Mammary epithelial cell (primary cell): ENCODE measurements at regions of chr21 and their contacts with region 1.

Region 1: DNA sequence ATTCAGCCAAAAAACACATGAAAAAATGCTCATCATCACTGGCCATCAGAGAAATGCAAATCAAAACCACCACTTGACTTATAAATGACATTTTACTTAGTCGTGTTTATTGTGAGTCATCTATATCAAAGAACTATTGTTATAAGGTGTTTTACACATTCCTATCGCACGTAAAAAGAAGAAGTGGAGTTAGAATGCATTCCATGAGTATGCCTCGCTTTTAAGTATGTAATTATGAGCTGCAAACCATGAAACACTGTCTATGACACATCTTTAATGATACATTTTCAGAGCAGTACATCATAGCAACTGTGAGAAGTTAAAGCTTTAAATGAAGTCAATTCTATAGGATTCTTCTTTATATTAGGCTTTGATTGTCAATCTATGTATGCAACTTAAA is 614.3 kb upstream of the ADAMTS5 start:
- DNase-seq: peak; percentile 92
- H3K4me3 ChIP-seq: no peak overlapping the region
- H3K27ac ChIP-seq: peak overlapping the region; percentile 89
- H3K4me1 ChIP-seq: peaks cover 22% of the 10 kb centered on the region
- H3K27me3 ChIP-seq: no peaks in the 10 kb centered on the region
- CTCF ChIP-seq: no peak

Region 2: DNA sequence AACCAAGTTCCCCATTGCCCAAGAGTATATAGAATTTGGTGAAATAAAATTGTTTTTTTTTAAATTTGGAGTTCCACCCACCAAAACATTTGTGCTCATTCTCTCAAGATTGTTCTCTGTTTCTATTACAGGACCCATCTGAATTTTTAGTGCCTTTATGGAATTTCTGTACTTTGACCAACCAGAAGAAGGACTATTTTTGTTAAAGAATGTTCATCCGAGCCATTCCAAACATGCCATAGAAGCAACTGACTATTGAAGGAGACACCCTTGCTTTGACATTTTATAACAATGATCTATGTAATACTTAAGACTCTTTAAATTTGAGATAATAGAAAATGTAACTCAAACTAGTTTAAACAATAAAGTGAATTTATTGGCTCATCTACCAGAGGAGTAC is 41.5 kb after region 1 on chr21:
- CTCF ChIA-PET with region 1: no interaction called
- dilution Hi-C with region 1: no loop called
- in situ Hi-C with region 1: no loop called
- intact Hi-C with region 1: no loop called
- DNase-seq: no peak
- H3K4me3 ChIP-seq: no peak overlapping the region
- H3K27ac ChIP-seq: no peak overlapping the region
- H3K4me1 ChIP-seq: no peaks in the 10 kb centered on the region
- H3K27me3 ChIP-seq: no peaks in the 10 kb centered on the region
- CTCF ChIP-seq: no peak

Region 3: GRCh38 chr21:27648560-27648959 is 67.4 kb after region 1 on chr21:
- CTCF ChIA-PET with region 1: no interaction called
- dilution Hi-C with region 1: no loop called
- in situ Hi-C with region 1: no loop called
- intact Hi-C with region 1: loop called (anchors 1 kb)
- DNase-seq: peak; percentile 85
- H3K4me3 ChIP-seq: no peak overlapping the region
- H3K27ac ChIP-seq: peak overlapping the region; percentile 98
- H3K4me1 ChIP-seq: peaks cover 47% of the 10 kb centered on the region
- H3K27me3 ChIP-seq: no peaks in the 10 kb centered on the region
- CTCF ChIP-seq: no peak

Region 4: DNA sequence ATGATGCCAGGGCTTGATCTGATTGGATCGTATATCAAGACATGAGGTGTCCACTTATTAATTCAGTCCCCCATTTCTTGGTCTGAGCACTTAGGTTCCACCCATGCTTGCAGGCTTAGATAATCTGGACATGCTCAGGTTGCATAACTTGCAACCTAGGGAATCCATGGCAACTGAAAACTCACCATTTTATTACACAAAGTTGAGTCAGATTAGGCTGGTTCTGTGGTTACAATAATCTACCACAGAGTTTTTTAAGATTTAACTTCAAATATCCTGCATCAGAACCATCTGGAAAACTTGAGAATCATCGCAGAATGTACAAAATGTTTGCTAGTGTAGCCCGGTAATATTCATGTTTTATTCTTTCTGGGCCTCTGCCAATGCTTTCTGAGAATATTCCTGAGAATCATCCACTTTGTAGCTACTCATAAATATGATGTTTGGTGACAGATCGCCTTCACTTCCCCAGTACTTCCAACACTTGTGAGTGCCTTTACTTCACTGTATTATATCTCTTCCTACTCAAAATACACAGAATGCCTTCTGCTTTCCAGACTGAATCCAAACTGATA is 93.0 kb after region 1 on chr21:
- CTCF ChIA-PET with region 1: no interaction called
- dilution Hi-C with region 1: no loop called
- in situ Hi-C with region 1: loop called in 1 of 2 experiments (anchors 10 kb)
- intact Hi-C with region 1: no loop called
- DNase-seq: peak; percentile 83
- H3K4me3 ChIP-seq: no peak overlapping the region
- H3K27ac ChIP-seq: peak overlapping the region; percentile 60
- H3K4me1 ChIP-seq: peaks cover 10% of the 10 kb centered on the region
- H3K27me3 ChIP-seq: no peaks in the 10 kb centered on the region
- CTCF ChIP-seq: no peak

Region 5: DNA sequence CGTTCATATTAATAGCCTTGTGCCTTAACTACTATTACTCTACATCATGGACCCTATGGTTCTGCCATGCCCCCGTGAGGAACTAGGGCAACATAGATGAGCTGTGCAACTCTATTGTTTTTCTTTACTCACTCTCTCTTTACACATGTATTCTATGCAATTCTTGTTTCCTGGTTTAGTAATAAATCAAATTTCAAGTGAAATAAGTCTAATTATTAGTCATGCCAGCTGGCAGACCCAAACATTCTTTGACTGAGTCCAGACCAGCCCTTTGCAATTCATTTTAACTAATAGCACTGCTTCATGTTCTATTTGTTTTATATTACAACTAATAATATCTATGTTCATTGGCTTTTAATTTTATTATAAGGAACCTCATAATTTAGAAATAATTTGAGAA is 175.0 kb after region 1 on chr21:
- CTCF ChIA-PET with region 1: no interaction called
- dilution Hi-C with region 1: no loop called
- in situ Hi-C with region 1: no loop called
- intact Hi-C with region 1: no loop called
- DNase-seq: no peak
- H3K4me3 ChIP-seq: no peak overlapping the region
- H3K27ac ChIP-seq: no peak overlapping the region
- H3K4me1 ChIP-seq: no peaks in the 10 kb centered on the region
- H3K27me3 ChIP-seq: no peaks in the 10 kb centered on the region
- CTCF ChIP-seq: no peak